Vagina (tissue), 2 donors: ENCODE measurements at regions of chr9 and their contacts with region 1.

Region 1: GRCh38 chr9:90914868-90915483 is 113.4 kb downstream of the SYK start:
- DNase-seq: no peak
- H3K4me3 ChIP-seq: no peak overlapping the region
- H3K27ac ChIP-seq: no peak overlapping the region
- H3K4me1 ChIP-seq: peaks cover 8% of the 10 kb centered on the region
- H3K27me3 ChIP-seq: no peaks in the 10 kb centered on the region
- CTCF ChIP-seq: peak; percentile 76 to 98 (median 79)
- POLR2A ChIP-seq: no peak

Region 2: DNA sequence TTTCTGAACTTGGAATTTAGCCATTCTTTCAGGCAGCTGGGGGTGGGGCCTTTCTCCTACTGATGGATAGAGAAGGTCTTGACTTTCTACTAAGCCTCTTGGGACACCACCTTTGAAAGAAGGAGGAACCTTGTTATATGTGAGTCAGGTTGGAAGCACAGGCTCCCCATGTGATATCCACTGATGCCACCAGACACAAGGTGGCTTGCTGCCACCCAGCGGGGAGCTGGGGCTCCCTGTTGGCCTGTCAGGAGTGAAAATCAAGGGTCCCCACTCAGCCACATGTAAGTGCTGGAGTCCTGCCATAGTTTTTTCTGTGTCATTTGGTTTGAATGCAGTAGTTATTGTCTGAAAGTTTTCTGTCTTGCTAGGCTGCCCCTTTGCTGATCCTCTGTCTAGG is 761.1 kb after region 1 on chr9:
- intact Hi-C with region 1: loop called (anchors 10 kb)
- DNase-seq: no peak
- H3K4me3 ChIP-seq: no peak overlapping the region
- H3K27ac ChIP-seq: no peak overlapping the region
- H3K4me1 ChIP-seq: no peaks in the 10 kb centered on the region
- H3K27me3 ChIP-seq: no peaks in the 10 kb centered on the region
- CTCF ChIP-seq: no peak
- POLR2A ChIP-seq: no peak